ENCODE measurements at regions of chr18 and their contacts with region 1.

Region 1: GRCh38 chr18:73842795-73843394 is 304.7 kb downstream of the FBXO15 start:
- DNase-seq: peak in 9 of 10 donors; percentile 32 to 75 (median 61)
- H3K4me3 ChIP-seq: peak overlapping the region in 35 of 59 donors; percentile 1 to 57 (median 29)
- H3K27ac ChIP-seq: no peak overlapping the region
- H3K27me3 ChIP-seq: peaks cover 0 to 4% (median 0%) of the 10 kb centered on the region in 45 donors
- CTCF ChIP-seq: peak; percentile 82 to 98 (median 91)

Region 2: GRCh38 chr18:72866901-72867701 is 975.8 kb before region 1 on chr18:
- intact Hi-C with region 1: loop called in 1 of 2 experiments (anchors 10 kb)
- DNase-seq: peak in 3 of 10 donors; percentile 26 to 57 (median 46)
- H3K4me3 ChIP-seq: peak overlapping the region; percentile 16 to 78 (median 62)
- H3K27ac ChIP-seq: peak overlapping the region in 57 of 59 donors; percentile 1 to 91 (median 78)
- H3K27me3 ChIP-seq: peaks cover 0 to 46% (median 19%) of the 10 kb centered on the region in 45 donors
- CTCF ChIP-seq: no peak